K562 (cell line): ENCODE measurements at regions of chr16 and their contacts with region 1.

Region 1: DNA sequence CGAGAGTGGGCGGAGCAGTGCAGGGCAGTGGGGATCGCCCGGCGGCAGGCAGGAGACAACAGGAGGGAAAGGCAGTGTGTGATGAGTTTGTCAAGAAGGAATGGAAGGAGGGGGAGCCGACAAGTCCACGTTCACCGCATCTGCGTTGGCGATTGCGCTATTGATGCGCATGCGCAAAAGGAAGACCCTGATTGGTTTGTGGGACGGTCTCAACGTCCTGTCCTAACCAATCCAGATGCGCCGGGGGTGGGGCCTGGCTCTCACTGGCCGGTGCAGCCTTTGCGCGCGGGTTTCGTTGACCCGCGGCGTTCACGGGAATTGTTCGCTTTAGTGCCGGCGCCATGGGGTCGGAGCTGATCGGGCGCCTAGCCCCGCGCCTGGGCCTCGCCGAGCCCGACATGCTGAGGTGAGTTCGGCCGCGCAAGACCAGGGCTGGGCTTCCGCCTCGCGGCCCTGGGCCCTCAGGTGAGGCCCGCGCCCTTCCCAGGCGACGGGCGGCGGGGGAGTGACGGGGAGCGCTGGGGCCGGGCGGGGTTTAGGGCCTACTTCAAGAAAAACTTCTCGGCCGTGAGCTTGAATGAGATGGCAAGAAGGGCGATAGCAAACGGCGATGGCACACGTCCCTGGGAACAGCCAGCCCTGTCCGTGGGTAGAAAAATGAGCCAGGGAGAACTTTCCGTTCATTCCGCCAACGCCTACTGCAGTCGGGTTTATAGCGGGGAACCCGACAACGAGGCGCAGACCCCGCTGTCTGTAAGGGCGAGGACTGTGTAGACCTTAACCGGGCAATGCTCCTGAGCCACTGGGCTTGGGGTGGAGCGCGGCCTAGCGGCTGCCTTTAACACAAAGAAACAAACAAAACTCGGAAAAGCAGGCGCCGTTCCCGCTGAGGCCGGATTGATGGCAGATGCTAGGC is at the start of gene ORC6:
- DNase-seq: peak; percentile 89 to 95 (median 92)
- ATAC-seq: peak; percentile 81
- H3K4me3 ChIP-seq: peak within 1 kb of the TSS; percentile 76
- H3K27ac ChIP-seq: peak within 1 kb of the TSS; percentile 98
- H3K4me1 ChIP-seq: peaks cover 6 to 19% of the 10 kb centered on the region in 2 experiments; a peak in 4 of 5 replicates
- H3K27me3 ChIP-seq: no peaks in the 10 kb centered on the region
- CTCF ChIP-seq: peak; percentile 61 to 68 (median 62)
- EP300 ChIP-seq: no peak
- POLR2A ChIP-seq: peak; percentile 80
- RAD21 ChIP-seq: peak in 1 of 2 experiments; percentile 51; a peak in 2 of 4 replicates
- polyA plus RNA-seq, gene ORC6: 18.7 to 28.5 TPM

Region 2: GRCh38 chr16:46573008-46573833 is 116.4 kb before region 1 on chr16:
- CTCF ChIA-PET with region 1: no interaction called
- POLR2A ChIA-PET with region 1: no interaction called
- in situ Hi-C with region 1: no loop called
- intact Hi-C with region 1: no loop called
- DNase-seq: peak; percentile 16 to 38 (median 22)
- ATAC-seq: peak; percentile 70
- H3K4me3 ChIP-seq: no peak overlapping the region
- H3K27ac ChIP-seq: no peak overlapping the region; the same call in 2 of the 3 replicates
- H3K4me1 ChIP-seq: peaks cover 7 to 14% of the 10 kb centered on the region in 2 experiments; a peak in 4 of 5 replicates
- H3K27me3 ChIP-seq: peaks cover 11 to 35% of the 10 kb centered on the region in 2 experiments; a peak in 3 of 5 replicates
- CTCF ChIP-seq: no peak
- EP300 ChIP-seq: no peak
- POLR2A ChIP-seq: no peak
- RAD21 ChIP-seq: no peak

Region 3: GRCh38 chr16:46638947-46639925 is 50.4 kb before region 1 on chr16:
- CTCF ChIA-PET with region 1: no interaction called
- POLR2A ChIA-PET with region 1: no interaction called
- in situ Hi-C with region 1: no loop called
- intact Hi-C with region 1: no loop called
- DNase-seq: no peak
- ATAC-seq: no peak
- H3K4me3 ChIP-seq: no peak overlapping the region
- H3K27ac ChIP-seq: no peak overlapping the region
- H3K4me1 ChIP-seq: no peaks in the 10 kb centered on the region
- H3K27me3 ChIP-seq: peaks cover 9 to 16% of the 10 kb centered on the region in 2 experiments
- CTCF ChIP-seq: no peak
- EP300 ChIP-seq: no peak
- POLR2A ChIP-seq: no peak
- RAD21 ChIP-seq: no peak

Region 4: GRCh38 chr16:46748775-46749705 is 59.4 kb after region 1 on chr16:
- CTCF ChIA-PET with region 1: no interaction called
- POLR2A ChIA-PET with region 1: interaction called, 3 read pairs
- in situ Hi-C with region 1: loop called (anchors 5 kb)
- intact Hi-C with region 1: loop called (anchors 1 kb)
- DNase-seq: peak in 2 of 4 experiments; percentile 53 to 75
- ATAC-seq: peak; percentile 68
- H3K4me3 ChIP-seq: no peak overlapping the region
- H3K27ac ChIP-seq: peak overlapping the region; percentile 40; the same call in 2 of the 3 replicates
- H3K4me1 ChIP-seq: peaks cover 24 to 32% of the 10 kb centered on the region in 2 experiments
- H3K27me3 ChIP-seq: no peaks in the 10 kb centered on the region
- CTCF ChIP-seq: no peak
- EP300 ChIP-seq: no peak
- POLR2A ChIP-seq: no peak
- RAD21 ChIP-seq: no peak

Region 5: GRCh38 chr16:46763147-46763546 is 73.5 kb after region 1 on chr16:
- CTCF ChIA-PET with region 1: no interaction called
- POLR2A ChIA-PET with region 1: no interaction called
- in situ Hi-C with region 1: no loop called
- intact Hi-C with region 1: no loop called
- DNase-seq: no peak
- ATAC-seq: no peak
- H3K4me3 ChIP-seq: no peak overlapping the region
- H3K27ac ChIP-seq: no peak overlapping the region
- H3K4me1 ChIP-seq: no peaks in the 10 kb centered on the region; a peak in 2 of 5 replicates
- H3K27me3 ChIP-seq: no peaks in the 10 kb centered on the region
- CTCF ChIP-seq: no peak
- EP300 ChIP-seq: no peak
- POLR2A ChIP-seq: no peak
- RAD21 ChIP-seq: no peak

Region 6: GRCh38 chr16:46783800-46784199 is 94.2 kb after region 1 on chr16:
- CTCF ChIA-PET with region 1: no interaction called
- POLR2A ChIA-PET with region 1: no interaction called
- in situ Hi-C with region 1: no loop called
- intact Hi-C with region 1: no loop called
- DNase-seq: no peak
- ATAC-seq: no peak
- H3K4me3 ChIP-seq: no peak overlapping the region
- H3K27ac ChIP-seq: no peak overlapping the region
- H3K4me1 ChIP-seq: peaks cover 0 to 2% of the 10 kb centered on the region in 2 experiments; a peak in 3 of 5 replicates
- H3K27me3 ChIP-seq: no peaks in the 10 kb centered on the region
- CTCF ChIP-seq: no peak
- EP300 ChIP-seq: no peak
- POLR2A ChIP-seq: no peak
- RAD21 ChIP-seq: no peak

Region 7: DNA sequence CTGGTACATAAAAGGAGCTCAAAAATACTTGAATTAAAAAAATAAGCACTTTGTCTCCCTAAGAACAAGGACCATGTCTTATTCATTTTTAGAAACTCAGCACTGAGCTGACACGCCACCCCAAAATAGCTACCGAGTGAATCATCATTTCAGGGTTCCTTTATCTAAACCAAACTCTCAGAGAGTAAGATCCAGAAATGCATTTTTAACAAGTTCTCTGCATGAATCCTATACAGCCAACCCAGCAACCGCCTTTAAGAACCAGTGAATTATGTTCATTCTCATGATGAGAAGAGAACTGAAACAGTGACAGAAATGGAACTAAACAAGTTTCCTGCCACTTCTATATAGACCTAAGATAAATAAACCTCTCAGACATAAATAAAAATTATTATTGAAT is 132.6 kb after region 1 on chr16:
- CTCF ChIA-PET with region 1: no interaction called
- POLR2A ChIA-PET with region 1: interaction called, 4 read pairs
- in situ Hi-C with region 1: loop called (anchors 10 kb)
- intact Hi-C with region 1: loop called (anchors 1 kb)
- DNase-seq: no peak
- ATAC-seq: no peak
- H3K4me3 ChIP-seq: no peak overlapping the region
- H3K27ac ChIP-seq: no peak overlapping the region
- H3K4me1 ChIP-seq: peaks cover 0 to 15% of the 10 kb centered on the region in 2 experiments; a peak in 2 of 5 replicates
- H3K27me3 ChIP-seq: no peaks in the 10 kb centered on the region
- CTCF ChIP-seq: no peak
- EP300 ChIP-seq: no peak
- POLR2A ChIP-seq: no peak
- RAD21 ChIP-seq: no peak

Region 8: DNA sequence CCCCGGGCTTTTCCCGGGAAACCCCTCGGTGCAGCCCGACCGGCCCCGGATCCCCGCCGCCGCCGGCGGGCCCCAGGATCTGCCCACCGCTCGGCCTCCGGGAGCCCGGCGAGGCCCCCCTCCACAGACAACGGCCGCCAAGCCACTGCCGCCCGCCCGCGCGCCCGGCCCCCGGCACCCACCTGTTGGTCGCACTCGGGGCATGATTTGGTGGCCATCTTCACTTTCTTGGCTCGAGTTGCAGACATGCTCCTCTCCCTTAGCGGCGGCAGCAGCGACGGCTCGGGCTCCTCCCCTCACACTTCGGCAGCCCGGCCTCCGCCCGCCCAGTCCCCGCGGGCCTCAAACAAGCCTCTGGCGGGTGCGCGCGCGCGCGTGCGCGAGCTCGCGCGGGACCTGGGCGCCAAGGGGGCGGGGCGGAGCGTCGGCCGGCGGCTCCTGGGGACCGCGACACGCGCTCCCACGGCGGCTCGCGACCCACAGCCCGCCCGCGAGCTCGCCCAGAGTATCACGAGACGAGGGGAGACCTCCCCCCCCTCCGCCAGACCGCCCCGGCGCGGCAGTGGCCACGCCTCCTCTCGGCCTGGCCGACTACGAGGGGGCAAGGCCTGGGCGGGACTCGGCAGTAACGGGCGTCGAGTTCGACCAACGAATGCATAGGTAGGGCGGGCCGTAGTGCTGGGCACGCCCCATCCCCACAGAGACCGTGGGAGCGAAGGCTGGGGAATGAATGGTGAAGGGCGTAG is 141.5 kb after region 1 on chr16 and contains the start of gene C16orf87:
- CTCF ChIA-PET with region 1: no interaction called
- POLR2A ChIA-PET with region 1: no interaction called
- in situ Hi-C with region 1: loop called (anchors 10 kb)
- intact Hi-C with region 1: loop called (anchors 5 kb)
- DNase-seq: peak; percentile 93 to 96 (median 94)
- ATAC-seq: peak; percentile 97
- H3K4me3 ChIP-seq: peak within 1 kb of the TSS; percentile 92
- H3K27ac ChIP-seq: peak within 1 kb of the TSS; percentile 74
- H3K4me1 ChIP-seq: peaks cover 4 to 13% of the 10 kb centered on the region in 2 experiments; a peak in 4 of 5 replicates
- H3K27me3 ChIP-seq: no peaks in the 10 kb centered on the region
- CTCF ChIP-seq: no peak
- EP300 ChIP-seq: no peak; the same call in 1 of the 2 replicates
- POLR2A ChIP-seq: peak; percentile 68
- RAD21 ChIP-seq: no peak
- polyA plus RNA-seq, gene C16orf87: 13.9 to 16.7 TPM